Activated CD4-positive, alpha-beta memory T cell treated with anti-CD3 and anti-CD28 coated beads, Interleukin-2, amount 10 ng/mL, durations not matched to agents 7 days and 5 days (primary cell): ENCODE measurements at regions of chr19 and their contacts with region 1.

Region 1: GRCh38 chr19:54674021-54674617 is 11.3 kb downstream of the LILRB4 start:
- DNase-seq: no peak
- H3K4me3 Mint-ChIP-seq: no peak overlapping the region
- H3K27ac Mint-ChIP-seq: no peak overlapping the region
- H3K4me1 Mint-ChIP-seq: no peaks in the 10 kb centered on the region
- H3K27me3 Mint-ChIP-seq: peaks cover 6% of the 10 kb centered on the region

Region 2: GRCh38 chr19:54481322-54481930 is 192.7 kb before region 1 on chr19:
- CTCF ChIA-PET with region 1: interaction called, 89 read pairs
- POLR2A ChIA-PET with region 1: no interaction called
- DNase-seq: peak; percentile 40
- H3K4me3 Mint-ChIP-seq: no peak overlapping the region
- H3K27ac Mint-ChIP-seq: no peak overlapping the region
- H3K4me1 Mint-ChIP-seq: peaks cover 38% of the 10 kb centered on the region
- H3K27me3 Mint-ChIP-seq: peaks cover 41% of the 10 kb centered on the region

Region 3: GRCh38 chr19:54648125-54648524 is 26.0 kb before region 1 on chr19:
- CTCF ChIA-PET with region 1: interaction called, 32 read pairs
- POLR2A ChIA-PET with region 1: no interaction called
- DNase-seq: no peak
- H3K4me3 Mint-ChIP-seq: no peak overlapping the region
- H3K27ac Mint-ChIP-seq: no peak overlapping the region
- H3K4me1 Mint-ChIP-seq: no peaks in the 10 kb centered on the region
- H3K27me3 Mint-ChIP-seq: peaks cover 12% of the 10 kb centered on the region

Region 4: DNA sequence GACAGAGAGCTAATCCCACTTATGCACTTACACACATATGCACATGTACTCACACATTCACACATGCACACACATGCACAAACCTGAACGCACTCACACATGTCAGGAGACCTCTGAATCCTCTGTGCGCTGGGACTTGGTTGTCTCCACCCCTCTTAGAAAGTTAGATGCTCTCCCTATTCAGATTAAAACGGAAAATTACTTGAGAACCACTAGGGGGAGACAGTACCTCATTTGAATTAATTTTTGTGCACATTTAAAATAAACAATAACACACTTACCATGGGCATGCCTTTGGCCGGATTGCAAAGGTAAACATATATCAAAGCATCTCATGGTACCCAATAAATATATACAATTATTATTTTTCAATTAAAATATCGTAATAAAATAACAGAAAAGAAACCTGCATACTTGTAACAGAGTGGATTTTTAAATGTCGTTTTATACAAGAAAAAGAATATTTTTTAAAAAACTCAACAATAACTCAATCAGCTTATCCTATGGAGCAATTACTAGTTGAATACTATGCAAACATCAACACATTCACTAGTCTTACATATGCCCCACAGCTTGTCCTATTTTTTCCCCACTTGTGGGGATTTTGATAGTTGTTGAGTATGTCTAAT is 20.8 kb before region 1 on chr19:
- CTCF ChIA-PET with region 1: interaction called, 32 read pairs
- POLR2A ChIA-PET with region 1: no interaction called
- DNase-seq: no peak
- H3K4me3 Mint-ChIP-seq: no peak overlapping the region
- H3K27ac Mint-ChIP-seq: no peak overlapping the region
- H3K4me1 Mint-ChIP-seq: no peaks in the 10 kb centered on the region
- H3K27me3 Mint-ChIP-seq: peaks cover 9% of the 10 kb centered on the region

Region 5: DNA sequence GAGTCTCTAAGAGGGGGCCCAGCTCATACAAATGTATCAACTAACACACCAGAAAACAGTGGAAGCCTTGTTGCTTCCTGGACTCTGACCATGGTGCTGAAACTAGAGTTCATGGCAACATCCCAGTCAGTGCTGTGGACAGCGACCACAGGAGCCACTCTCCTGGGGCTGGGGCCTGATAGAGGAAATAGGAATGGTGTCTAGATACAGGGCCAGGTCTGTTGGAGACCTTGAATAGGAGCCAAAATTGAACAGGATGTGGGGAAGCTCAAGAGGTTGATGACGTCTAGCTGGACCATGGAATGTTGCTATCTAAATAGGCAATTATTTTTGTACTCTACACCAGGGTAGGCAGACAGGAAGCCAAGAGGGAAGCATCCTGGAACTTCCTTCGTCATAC is 10.4 kb after region 1 on chr19:
- CTCF ChIA-PET with region 1: interaction called, 28 read pairs
- POLR2A ChIA-PET with region 1: no interaction called
- DNase-seq: peak; percentile 25
- H3K4me3 Mint-ChIP-seq: no peak overlapping the region
- H3K27ac Mint-ChIP-seq: no peak overlapping the region
- H3K4me1 Mint-ChIP-seq: no peaks in the 10 kb centered on the region
- H3K27me3 Mint-ChIP-seq: peaks cover 11% of the 10 kb centered on the region

Region 6: GRCh38 chr19:54792814-54793213 is 118.7 kb after region 1 on chr19:
- CTCF ChIA-PET with region 1: no interaction called
- POLR2A ChIA-PET with region 1: no interaction called
- DNase-seq: no peak
- H3K4me3 Mint-ChIP-seq: peak overlapping the region; percentile 59
- H3K27ac Mint-ChIP-seq: no peak overlapping the region
- H3K4me1 Mint-ChIP-seq: peaks cover 16% of the 10 kb centered on the region
- H3K27me3 Mint-ChIP-seq: peaks cover 26% of the 10 kb centered on the region